HepG2 (cell line): ENCODE measurements at regions of chr11 and their contacts with region 1.

Region 1: DNA sequence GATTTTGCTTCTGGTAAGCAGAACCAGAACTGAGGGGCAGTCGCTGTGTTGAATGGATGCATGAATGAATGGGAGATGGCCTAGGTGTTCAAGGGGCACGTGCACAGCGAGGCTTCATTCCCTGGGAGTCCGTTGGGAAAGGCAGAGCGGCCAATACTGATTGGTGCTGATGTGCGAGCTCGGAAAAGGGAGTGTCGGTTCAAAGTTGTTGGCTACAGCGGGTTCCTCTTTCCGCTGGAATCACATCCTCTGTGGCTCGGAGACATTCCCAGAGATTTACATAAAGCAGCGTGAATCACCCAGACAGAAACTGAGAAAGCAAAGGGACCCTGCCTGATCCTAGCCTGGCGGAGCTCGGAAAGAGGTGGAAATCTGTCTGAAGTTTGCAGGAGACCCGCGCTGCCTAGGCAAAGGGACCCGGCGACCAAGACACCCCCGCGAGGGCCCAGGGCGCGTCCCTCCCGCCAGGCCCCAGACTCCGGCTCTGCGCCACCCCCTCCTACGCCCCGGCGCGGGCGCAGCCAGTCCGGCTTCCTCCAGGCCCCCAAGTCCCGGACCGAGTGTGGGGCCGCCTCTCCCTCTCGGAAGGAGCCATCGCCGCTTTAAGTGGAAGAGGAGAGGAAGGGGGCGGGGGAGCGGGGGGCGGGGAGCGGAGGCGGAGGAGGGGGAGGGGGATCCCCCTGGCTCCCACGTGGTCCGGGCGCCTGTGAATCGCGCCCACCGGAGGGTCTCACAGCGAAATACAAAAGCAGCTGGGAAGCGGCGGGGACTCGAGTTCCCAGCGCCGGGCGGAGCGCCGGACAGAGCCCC is at the start of gene FJX1:
- DNase-seq: peak; percentile 17
- ATAC-seq: peak; percentile 63
- H3K4me3 ChIP-seq: peak within 1 kb of the TSS; percentile 55 to 68 (median 60); a peak in 5 of 6 replicates
- H3K27ac ChIP-seq: no peak within 1 kb of the TSS
- H3K4me1 ChIP-seq: peaks cover 7% of the 10 kb centered on the region; the same call in 1 of the 2 replicates
- H3K27me3 ChIP-seq: peaks cover 1 to 31% of the 10 kb centered on the region in 2 experiments; a peak in 4 of 5 replicates
- CTCF ChIP-seq: 0 out of 2 replicates have a peak, but pooled peaks have one; percentile 7
- EP300 ChIP-seq: no peak
- POLR2A ChIP-seq: no peak
- RAD21 ChIP-seq: no peak
- total RNA-seq, gene FJX1: 0.44 and 0.82 TPM in 2 replicates

Region 2: GRCh38 chr11:35579557-35580396 is 38.1 kb before region 1 on chr11:
- CTCF ChIA-PET with region 1: no interaction called
- POLR2A ChIA-PET with region 1: no interaction called
- in situ Hi-C with region 1: no loop called
- intact Hi-C with region 1: no loop called
- DNase-seq: peak; percentile 62
- ATAC-seq: peak; percentile 71
- H3K4me3 ChIP-seq: no peak overlapping the region; a peak in 1 of 6 replicates
- H3K27ac ChIP-seq: no peak overlapping the region
- H3K4me1 ChIP-seq: peaks cover 16% of the 10 kb centered on the region; the same call in 1 of the 2 replicates
- H3K27me3 ChIP-seq: 0 out of 5 replicates have a peak, but pooled peaks cover 0 to 7% of the 10 kb centered on the region in 2 experiments
- CTCF ChIP-seq: no peak
- EP300 ChIP-seq: no peak
- POLR2A ChIP-seq: no peak
- RAD21 ChIP-seq: no peak

Region 3: GRCh38 chr11:35641171-35641897 is 23.4 kb after region 1 on chr11:
- CTCF ChIA-PET with region 1: no interaction called
- POLR2A ChIA-PET with region 1: no interaction called
- in situ Hi-C with region 1: no loop called
- intact Hi-C with region 1: no loop called
- DNase-seq: no peak
- ATAC-seq: no peak
- H3K4me3 ChIP-seq: no peak overlapping the region
- H3K27ac ChIP-seq: no peak overlapping the region
- H3K4me1 ChIP-seq: no peaks in the 10 kb centered on the region
- H3K27me3 ChIP-seq: peaks cover 3 to 33% of the 10 kb centered on the region in 2 experiments; a peak in 3 of 5 replicates
- CTCF ChIP-seq: no peak
- EP300 ChIP-seq: no peak
- POLR2A ChIP-seq: no peak
- RAD21 ChIP-seq: no peak

Region 4: DNA sequence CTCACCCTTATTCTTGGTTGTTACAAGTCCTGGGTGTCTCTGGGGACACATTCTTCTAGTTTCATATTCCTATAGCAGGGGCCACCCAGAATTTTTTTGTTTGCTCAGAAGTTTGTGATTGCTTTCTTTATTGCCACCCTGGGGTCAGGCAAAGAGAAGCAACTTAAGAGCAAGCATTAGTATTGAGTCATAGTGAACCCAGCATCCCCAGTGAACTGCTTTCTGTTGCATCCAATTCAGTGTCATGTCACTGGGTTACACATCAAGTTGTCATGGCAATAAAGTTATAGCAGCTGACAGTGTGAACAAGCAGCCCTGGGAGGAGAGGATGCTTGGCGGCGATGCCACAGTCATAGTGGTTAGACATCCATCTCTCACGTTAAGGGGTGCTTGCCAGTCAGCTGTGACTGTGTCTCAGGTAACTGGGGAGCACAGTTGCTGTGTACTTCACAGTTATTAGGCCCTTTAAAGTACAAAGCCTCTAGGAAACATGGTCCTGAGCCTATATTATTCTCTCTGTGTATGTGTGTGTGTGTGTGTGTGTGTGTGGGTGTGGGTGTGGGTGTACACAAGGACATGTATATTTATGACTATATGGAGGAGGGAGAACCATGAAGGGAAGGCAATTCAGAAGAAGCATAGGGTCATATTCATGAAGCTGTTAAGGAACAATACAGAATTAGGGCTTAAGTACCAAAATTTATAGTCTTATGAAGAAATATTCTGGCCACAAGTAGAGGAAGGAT is 97.2 kb after region 1 on chr11:
- CTCF ChIA-PET with region 1: no interaction called
- POLR2A ChIA-PET with region 1: no interaction called
- in situ Hi-C with region 1: no loop called
- intact Hi-C with region 1: loop called (anchors 10 kb)
- DNase-seq: no peak
- ATAC-seq: no peak
- H3K4me3 ChIP-seq: no peak overlapping the region
- H3K27ac ChIP-seq: no peak overlapping the region
- H3K4me1 ChIP-seq: no peaks in the 10 kb centered on the region
- H3K27me3 ChIP-seq: no peaks in the 10 kb centered on the region
- CTCF ChIP-seq: no peak
- EP300 ChIP-seq: no peak
- POLR2A ChIP-seq: no peak
- RAD21 ChIP-seq: no peak

Region 5: DNA sequence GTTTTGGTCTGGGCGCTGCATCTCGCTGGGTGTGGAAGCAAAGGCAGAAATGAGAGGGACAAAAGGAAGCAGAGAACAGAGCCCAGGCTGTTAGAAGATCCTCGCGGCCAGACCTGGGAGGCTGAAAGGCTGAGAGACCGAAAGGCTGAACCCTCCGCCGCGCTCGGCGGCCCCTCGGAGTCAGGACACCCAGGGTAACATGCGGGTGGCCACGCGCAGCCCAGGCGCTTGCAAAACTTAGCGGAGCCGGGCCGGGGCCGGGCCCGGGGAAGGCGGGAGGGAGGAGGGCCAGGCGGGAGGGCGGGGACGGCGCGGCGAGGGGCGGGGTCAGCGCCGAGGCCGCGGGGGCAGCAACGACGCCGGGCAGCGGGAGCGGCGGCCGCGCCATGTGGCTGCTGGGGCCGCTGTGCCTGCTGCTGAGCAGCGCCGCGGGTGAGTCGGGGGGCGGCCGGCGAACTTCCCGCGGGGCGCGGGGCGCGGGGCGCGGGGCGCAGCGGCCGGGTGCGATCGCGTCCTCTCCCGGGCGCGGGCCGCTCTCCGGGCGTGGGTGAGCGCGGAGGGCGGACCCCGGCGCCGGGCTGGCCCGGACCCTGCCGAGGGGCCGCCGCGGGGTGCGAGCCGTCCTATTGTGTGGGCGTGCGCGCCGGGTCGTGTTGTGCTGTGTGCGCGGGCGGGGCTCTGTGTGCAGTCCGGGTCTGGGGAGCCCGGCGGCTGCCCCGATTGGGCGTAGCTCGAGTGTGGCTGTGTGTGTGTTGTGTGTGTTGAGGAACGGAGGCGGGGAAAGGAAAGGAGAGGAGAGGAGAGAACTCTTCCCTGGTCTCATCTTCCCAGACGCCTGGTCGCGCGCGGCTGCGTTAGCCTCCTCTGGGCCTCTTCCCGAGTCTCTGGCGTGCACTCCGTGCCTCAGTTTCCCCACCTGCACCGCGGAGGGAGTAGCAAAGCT is 326.1 kb after region 1 on chr11 and contains the start of gene LDLRAD3:
- CTCF ChIA-PET with region 1: no interaction called
- POLR2A ChIA-PET with region 1: no interaction called
- in situ Hi-C with region 1: no loop called
- intact Hi-C with region 1: loop called (anchors 5 kb)
- DNase-seq: peak; percentile 20
- ATAC-seq: peak; percentile 87
- H3K4me3 ChIP-seq: peak within 1 kb of the TSS; percentile 36 to 66 (median 49)
- H3K27ac ChIP-seq: no peak within 1 kb of the TSS
- H3K4me1 ChIP-seq: peaks cover 7% of the 10 kb centered on the region
- H3K27me3 ChIP-seq: peaks cover 7 to 46% of the 10 kb centered on the region in 2 experiments
- CTCF ChIP-seq: no peak
- EP300 ChIP-seq: no peak
- POLR2A ChIP-seq: no peak
- RAD21 ChIP-seq: no peak
- total RNA-seq, gene LDLRAD3: 0.34 and 0.60 TPM in 2 replicates

Region 6: GRCh38 chr11:36126678-36127077 is 508.8 kb after region 1 on chr11:
- CTCF ChIA-PET with region 1: interaction called, 23 read pairs
- POLR2A ChIA-PET with region 1: no interaction called
- in situ Hi-C with region 1: loop called (anchors 5 kb)
- intact Hi-C with region 1: no loop called
- DNase-seq: no peak
- ATAC-seq: no peak
- H3K4me3 ChIP-seq: no peak overlapping the region
- H3K27ac ChIP-seq: no peak overlapping the region
- H3K4me1 ChIP-seq: no peaks in the 10 kb centered on the region
- H3K27me3 ChIP-seq: peaks cover 7 to 16% of the 10 kb centered on the region in 2 experiments; a peak in 3 of 5 replicates
- CTCF ChIP-seq: no peak
- EP300 ChIP-seq: no peak
- POLR2A ChIP-seq: no peak
- RAD21 ChIP-seq: no peak

Region 7: DNA sequence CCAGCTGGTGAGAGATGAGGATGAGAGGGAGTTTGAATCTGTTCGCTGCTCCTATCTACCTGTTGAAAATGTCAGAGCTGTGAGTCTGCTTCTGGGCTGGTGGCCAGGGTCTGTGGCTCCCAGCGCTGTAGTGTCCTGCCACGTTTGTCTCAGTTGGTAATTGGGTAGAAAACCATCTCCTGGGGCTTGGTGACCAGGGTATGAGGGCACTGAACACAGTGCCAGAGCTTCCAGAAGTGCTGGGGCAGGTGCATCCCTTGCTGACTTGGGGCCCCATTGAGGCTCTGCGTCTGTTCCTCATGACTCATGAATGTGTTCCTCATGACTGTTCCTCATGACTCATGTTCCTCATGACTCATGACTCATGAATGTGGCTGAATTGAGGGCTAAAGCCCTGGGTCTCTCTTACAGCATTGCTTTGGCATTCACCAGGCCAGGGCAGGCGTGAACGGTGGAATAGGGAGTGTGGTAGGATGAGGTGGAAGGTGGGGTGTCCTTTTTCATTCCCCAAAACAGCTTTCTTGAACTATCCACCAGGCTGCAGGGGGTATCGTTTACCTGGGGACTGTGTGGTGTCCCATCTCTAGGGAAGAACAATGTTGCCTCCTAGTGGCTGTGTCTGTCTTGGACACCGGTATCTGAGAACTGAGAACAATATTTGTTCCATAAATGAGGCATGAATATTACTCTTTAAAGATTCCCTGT is 531.8 kb after region 1 on chr11:
- CTCF ChIA-PET with region 1: no interaction called
- POLR2A ChIA-PET with region 1: no interaction called
- in situ Hi-C with region 1: no loop called
- intact Hi-C with region 1: loop called (anchors 1 kb)
- DNase-seq: peak; percentile 68
- ATAC-seq: peak; percentile 91
- H3K4me3 ChIP-seq: no peak overlapping the region
- H3K27ac ChIP-seq: no peak overlapping the region
- H3K4me1 ChIP-seq: no peaks in the 10 kb centered on the region
- H3K27me3 ChIP-seq: no peaks in the 10 kb centered on the region
- CTCF ChIP-seq: peak; percentile 56
- EP300 ChIP-seq: peak in 1 of 2 experiments; percentile 25; a peak in 1 of 4 replicates
- POLR2A ChIP-seq: no peak
- RAD21 ChIP-seq: no peak

Region 8: GRCh38 chr11:36265793-36266628 is 648.1 kb after region 1 on chr11:
- CTCF ChIA-PET with region 1: interaction called, 11 read pairs
- POLR2A ChIA-PET with region 1: no interaction called
- in situ Hi-C with region 1: loop called (anchors 5 kb)
- intact Hi-C with region 1: loop called (anchors 1 kb)
- DNase-seq: peak; percentile 16
- ATAC-seq: peak; percentile 89
- H3K4me3 ChIP-seq: no peak overlapping the region
- H3K27ac ChIP-seq: no peak overlapping the region
- H3K4me1 ChIP-seq: no peaks in the 10 kb centered on the region
- H3K27me3 ChIP-seq: peaks cover 0 to 10% of the 10 kb centered on the region in 2 experiments; a peak in 2 of 5 replicates
- CTCF ChIP-seq: peak; percentile 88
- EP300 ChIP-seq: no peak
- POLR2A ChIP-seq: no peak
- RAD21 ChIP-seq: peak; percentile 64